HepG2 (cell line): ENCODE measurements at regions of chr20 and their contacts with region 1.

Region 1: DNA sequence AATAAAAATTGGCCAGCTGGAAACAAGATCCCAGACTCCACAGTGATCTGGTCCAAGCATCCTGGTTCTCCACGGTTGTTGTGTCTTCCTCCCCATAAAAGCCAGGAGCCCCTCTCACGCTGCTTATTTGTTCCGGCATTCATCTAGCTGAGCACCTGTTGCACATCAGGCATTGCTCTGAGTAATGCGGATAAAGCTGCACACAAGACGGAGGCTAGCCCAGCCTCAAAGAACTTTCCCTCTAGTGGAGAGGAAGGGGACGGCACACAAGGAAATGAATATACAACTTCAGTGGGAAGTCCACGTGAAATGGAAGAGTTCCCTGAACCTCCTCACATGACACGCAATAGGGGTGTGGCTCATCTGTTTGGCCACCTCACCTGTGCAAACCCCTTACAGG is 30.3 kb upstream of the NXT1 start:
- DNase-seq: peak; percentile 47
- ATAC-seq: peak; percentile 89
- H3K4me3 ChIP-seq: no peak overlapping the region
- H3K27ac ChIP-seq: no peak overlapping the region
- H3K4me1 ChIP-seq: no peaks in the 10 kb centered on the region
- H3K27me3 ChIP-seq: no peaks in the 10 kb centered on the region
- CTCF ChIP-seq: peak; percentile 45
- EP300 ChIP-seq: no peak
- POLR2A ChIP-seq: no peak
- RAD21 ChIP-seq: 0 out of 2 replicates have a peak, but pooled peaks have one; percentile 13

Region 2: DNA sequence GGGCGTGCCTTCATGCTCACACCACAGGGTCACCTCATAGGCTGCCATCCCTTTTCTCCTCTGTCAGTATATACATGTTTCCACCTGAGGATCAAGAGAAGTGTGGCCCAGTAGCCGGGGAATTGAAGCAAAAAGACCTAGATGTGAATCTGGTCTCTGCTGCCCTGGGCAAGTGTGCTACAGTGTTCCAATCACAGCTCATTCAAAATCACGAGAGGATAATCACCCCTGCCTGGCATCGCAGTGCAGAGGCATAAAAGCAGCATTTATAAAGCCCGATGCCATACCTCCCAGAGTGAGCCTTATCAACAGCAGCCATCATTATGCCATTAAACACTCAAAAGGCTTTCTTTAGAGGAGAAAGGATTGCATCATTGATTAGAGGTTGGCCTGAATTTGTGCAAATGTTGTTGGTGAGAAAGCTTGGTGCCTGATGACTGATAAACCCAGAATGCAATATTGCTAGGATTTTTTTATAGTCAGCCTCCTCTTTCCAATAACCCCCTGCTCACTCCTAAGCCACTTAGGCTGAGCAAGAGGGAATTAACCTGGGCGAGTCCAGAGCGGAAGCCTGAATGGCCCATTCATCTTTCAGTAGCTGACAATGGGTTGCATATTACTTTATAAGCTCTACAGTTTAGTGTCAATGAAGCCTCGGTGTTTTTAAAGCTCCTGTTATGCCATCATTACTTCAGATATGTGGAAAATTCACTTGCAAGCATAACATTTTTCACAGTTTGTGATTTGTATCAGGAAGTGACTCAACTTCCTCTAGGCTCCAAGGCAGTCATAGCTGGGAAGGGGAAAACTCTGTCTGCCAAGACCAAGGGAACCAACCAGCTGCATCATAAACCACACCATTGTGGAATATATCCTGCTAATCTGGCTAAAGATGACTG is 62.2 kb before region 1 on chr20:
- CTCF ChIA-PET with region 1: no interaction called
- POLR2A ChIA-PET with region 1: no interaction called
- in situ Hi-C with region 1: no loop called
- intact Hi-C with region 1: loop called (anchors 5 kb)
- DNase-seq: no peak
- ATAC-seq: no peak
- H3K4me3 ChIP-seq: no peak overlapping the region
- H3K27ac ChIP-seq: no peak overlapping the region
- H3K4me1 ChIP-seq: no peaks in the 10 kb centered on the region
- H3K27me3 ChIP-seq: peaks cover 3 to 5% of the 10 kb centered on the region in 2 experiments; a peak in 4 of 5 replicates
- CTCF ChIP-seq: no peak
- EP300 ChIP-seq: no peak
- POLR2A ChIP-seq: no peak
- RAD21 ChIP-seq: no peak